ENCODE measurements at regions of chr17 and their contacts with region 1.

Region 1: GRCh38 chr17:7931709-7932482 is at the starts of genes CNTROB and TRAPPC1:
- DNase-seq: peak; percentile 100
- H3K4me3 Mint-ChIP-seq: peak within 1 kb of the TSS; percentile 94
- H3K27ac Mint-ChIP-seq: peak within 1 kb of the TSS; percentile 96
- H3K4me1 Mint-ChIP-seq: peaks cover 55% of the 10 kb centered on the region
- H3K27me3 Mint-ChIP-seq: no peaks in the 10 kb centered on the region
- total RNA-seq, gene CNTROB: 74.3 to 77.4 TPM
- total RNA-seq, gene TRAPPC1: 235 to 251 TPM

Region 2: GRCh38 chr17:7883781-7884386 is 48.0 kb before region 1 on chr17:
- CTCF ChIA-PET with region 1: no interaction called
- POLR2A ChIA-PET with region 1: no interaction called
- DNase-seq: peak; percentile 35
- H3K4me3 Mint-ChIP-seq: peak overlapping the region; percentile 71
- H3K27ac Mint-ChIP-seq: peak overlapping the region; percentile 85
- H3K4me1 Mint-ChIP-seq: peaks cover 6% of the 10 kb centered on the region
- H3K27me3 Mint-ChIP-seq: no peaks in the 10 kb centered on the region

Region 3: DNA sequence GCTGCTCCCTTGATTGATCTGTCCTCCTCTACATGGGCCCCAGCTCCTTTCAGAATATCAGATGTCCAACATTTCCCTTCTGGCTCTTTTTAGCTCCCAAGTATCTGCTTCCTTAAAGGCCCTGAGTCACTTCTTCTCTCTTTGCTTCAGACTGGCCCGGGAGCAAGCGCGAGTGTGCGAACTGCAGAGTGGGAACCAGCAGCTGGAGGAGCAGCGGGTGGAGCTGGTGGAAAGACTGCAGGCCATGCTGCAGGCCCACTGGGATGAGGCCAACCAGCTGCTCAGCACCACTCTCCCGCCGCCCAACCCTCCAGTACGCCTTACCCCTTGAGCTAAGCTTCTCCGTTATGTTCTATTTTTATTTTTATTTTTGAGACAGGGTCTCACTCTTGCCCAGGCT is 12.4 kb after region 1 on chr17:
- CTCF ChIA-PET with region 1: interaction called, 17 read pairs
- POLR2A ChIA-PET with region 1: interaction called, 3 read pairs
- DNase-seq: no peak
- H3K4me3 Mint-ChIP-seq: no peak overlapping the region
- H3K27ac Mint-ChIP-seq: peak overlapping the region; percentile 19
- H3K4me1 Mint-ChIP-seq: peaks cover 4% of the 10 kb centered on the region
- H3K27me3 Mint-ChIP-seq: no peaks in the 10 kb centered on the region